ENCODE measurements at regions of chr6 and their contacts with region 1.

Region 1: DNA sequence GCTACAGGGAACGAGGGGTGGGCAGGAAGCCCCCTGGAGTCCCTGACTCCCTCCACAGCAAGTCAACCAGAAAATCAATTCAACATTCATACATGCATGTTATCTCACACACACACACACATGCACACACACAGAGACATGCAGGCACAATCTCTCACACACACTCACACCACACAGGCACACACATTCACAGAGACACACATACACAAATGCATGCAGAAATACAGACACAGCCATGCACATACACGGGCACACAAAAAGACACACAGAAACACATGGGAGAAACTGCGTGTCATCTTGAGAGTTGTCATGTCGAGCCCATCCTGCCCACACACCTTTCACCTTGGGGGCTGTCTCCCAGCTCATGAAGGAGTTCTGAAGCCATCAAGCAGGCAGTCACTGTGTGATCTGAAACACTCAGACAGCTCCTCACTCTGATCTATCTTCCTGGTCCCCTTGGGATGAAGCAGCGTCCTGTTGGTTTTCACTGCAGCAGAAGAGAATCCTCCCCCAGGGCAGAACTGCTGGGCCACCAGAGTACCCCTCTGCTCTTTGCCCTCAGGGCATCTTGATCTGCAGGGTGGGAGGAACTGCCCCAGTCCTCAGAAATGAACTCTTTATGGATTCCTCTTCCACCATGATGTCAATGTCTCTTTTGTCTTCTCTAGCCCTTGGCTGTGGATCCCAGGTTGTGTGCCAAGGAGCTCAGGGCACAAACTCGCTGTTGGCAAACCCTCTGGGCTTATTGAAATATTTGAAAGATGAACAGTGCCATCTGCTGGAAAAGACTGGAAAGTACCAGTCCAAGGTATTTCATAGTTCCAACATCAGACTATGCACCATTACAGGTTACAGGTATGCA is 8.8 kb downstream of the RAET1L start:
- DNase-seq: peak in 1 of 2 donors; percentile 68
- ATAC-seq: peak in 7 of 8 donors; percentile 71 to 85 (median 83)
- H3K4me3 ChIP-seq: no peak overlapping the region
- H3K27ac ChIP-seq: no peak overlapping the region
- H3K4me1 ChIP-seq: peaks cover 0 to 10% (median 0%) of the 10 kb centered on the region in 9 donors
- H3K27me3 ChIP-seq: peaks cover 16 to 82% (median 72%) of the 10 kb centered on the region in 7 donors
- CTCF ChIP-seq: peak; percentile 52 to 81 (median 72)

Region 2: GRCh38 chr6:149473080-149474052 is 543.2 kb before region 1 on chr6:
- intact Hi-C with region 1: no loop called
- DNase-seq: no peak
- ATAC-seq: peak in 7 of 8 donors; percentile 45 to 84 (median 69)
- H3K4me3 ChIP-seq: peak overlapping the region in 3 of 10 donors; percentile 4 to 15 (median 8)
- H3K27ac ChIP-seq: no peak overlapping the region
- H3K4me1 ChIP-seq: peaks cover 0 to 16% (median 10%) of the 10 kb centered on the region in 9 donors
- H3K27me3 ChIP-seq: peaks cover 0 to 15% (median 5%) of the 10 kb centered on the region in 7 donors
- CTCF ChIP-seq: peak in 1 of 9 donors; percentile 24

Region 3: GRCh38 chr6:149834513-149835481 is 181.8 kb before region 1 on chr6:
- intact Hi-C with region 1: loop called in 6 of 10 experiments (anchors 5 to 10 kb)
- DNase-seq: peak in 1 of 2 donors; percentile 54
- ATAC-seq: peak in 4 of 8 donors; percentile 37 to 72 (median 56)
- H3K4me3 ChIP-seq: no peak overlapping the region
- H3K27ac ChIP-seq: no peak overlapping the region
- H3K4me1 ChIP-seq: peaks cover 0 to 1% (median 0%) of the 10 kb centered on the region in 9 donors
- H3K27me3 ChIP-seq: no peaks in the 10 kb centered on the region
- CTCF ChIP-seq: peak; percentile 82 to 97 (median 93)

Region 4: DNA sequence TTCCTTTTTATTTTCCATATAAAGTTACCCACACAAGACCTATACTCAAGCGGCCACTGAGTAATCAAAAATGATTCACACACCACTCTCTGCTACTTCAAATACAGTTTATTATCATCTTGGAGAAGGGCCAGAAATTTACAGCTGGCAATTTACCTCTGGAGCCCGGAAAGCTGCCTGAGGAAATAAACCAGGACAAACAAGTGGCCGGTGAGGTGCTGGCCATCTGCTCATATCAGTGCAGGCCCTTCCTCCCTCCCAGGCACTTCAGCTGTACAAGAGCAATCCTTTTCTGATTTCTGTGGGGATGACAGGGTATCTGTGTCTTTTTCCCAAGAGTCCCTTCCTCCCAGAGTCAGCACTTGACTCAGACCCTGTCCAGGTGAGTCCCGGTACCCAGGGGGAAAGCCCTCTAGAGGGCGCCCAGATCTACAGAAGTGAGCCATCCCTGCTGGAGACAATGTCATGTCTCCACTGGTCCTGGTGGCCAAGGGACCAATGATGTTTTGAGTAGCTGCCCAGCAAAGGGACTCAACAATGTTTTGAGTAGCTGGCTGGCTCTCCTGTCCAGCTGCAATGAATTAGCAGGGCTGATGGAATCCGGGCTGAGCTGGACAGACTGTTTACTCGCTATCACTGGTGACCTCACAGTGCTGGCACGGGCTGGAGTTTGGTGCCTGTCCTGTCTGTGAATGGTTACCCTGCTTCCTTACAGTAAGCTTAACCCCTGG is 176.0 kb before region 1 on chr6:
- intact Hi-C with region 1: loop called in 5 of 10 experiments (anchors 2 to 10 kb)
- DNase-seq: peak; percentile 79 to 85
- ATAC-seq: peak; percentile 94 to 98 (median 96)
- H3K4me3 ChIP-seq: no peak overlapping the region
- H3K27ac ChIP-seq: peak overlapping the region in 4 of 10 donors; percentile 11 to 51 (median 33)
- H3K4me1 ChIP-seq: peaks cover 0 to 17% (median 11%) of the 10 kb centered on the region in 9 donors
- H3K27me3 ChIP-seq: no peaks in the 10 kb centered on the region
- CTCF ChIP-seq: peak; percentile 33 to 76 (median 60)

Region 5: DNA sequence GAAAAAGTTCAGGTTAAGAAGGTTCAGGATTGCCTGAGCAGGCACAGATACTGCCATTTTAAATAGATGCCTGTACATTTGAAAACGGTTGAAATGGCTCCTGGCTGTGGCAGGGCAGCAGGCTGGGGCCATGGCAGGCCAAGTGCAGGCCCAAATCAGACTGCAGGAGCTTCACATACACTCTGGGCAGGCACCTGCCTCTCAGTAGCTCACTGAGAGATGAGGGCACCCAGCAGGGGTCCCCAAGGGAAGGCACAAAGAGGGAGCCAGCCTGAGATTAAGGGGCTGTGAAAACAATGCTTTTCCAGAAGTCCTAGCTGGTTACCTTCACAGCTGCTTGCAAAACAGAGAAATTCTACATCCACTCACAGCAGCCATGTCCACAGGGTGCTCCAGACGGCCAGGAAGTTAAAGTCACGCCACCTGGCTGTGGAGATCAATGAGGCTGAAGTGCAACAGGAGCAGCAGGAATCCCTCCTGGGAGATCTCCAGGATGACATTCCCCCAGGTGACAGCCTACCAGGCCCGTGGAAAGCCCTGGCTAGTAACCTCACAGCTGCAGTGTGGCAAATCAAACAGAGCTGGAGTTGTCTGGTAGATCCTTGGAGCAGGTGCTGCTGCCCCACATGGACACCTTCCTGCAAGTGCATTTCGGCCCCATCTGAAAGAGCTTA is 112.5 kb before region 1 on chr6:
- intact Hi-C with region 1: no loop called
- DNase-seq: no peak
- ATAC-seq: no peak
- H3K4me3 ChIP-seq: no peak overlapping the region
- H3K27ac ChIP-seq: no peak overlapping the region
- H3K4me1 ChIP-seq: peaks cover 0 to 13% (median 9%) of the 10 kb centered on the region in 9 donors
- H3K27me3 ChIP-seq: no peaks in the 10 kb centered on the region
- CTCF ChIP-seq: no peak

Region 6: GRCh38 chr6:150195996-150196417 is 179.5 kb after region 1 on chr6:
- intact Hi-C with region 1: no loop called
- DNase-seq: no peak
- ATAC-seq: peak in 5 of 8 donors; percentile 34 to 60 (median 41)
- H3K4me3 ChIP-seq: no peak overlapping the region
- H3K27ac ChIP-seq: peak overlapping the region in 4 of 10 donors; percentile 8 to 31 (median 12)
- H3K4me1 ChIP-seq: peaks cover 0 to 51% (median 26%) of the 10 kb centered on the region in 9 donors
- H3K27me3 ChIP-seq: no peaks in the 10 kb centered on the region
- CTCF ChIP-seq: no peak

Region 7: DNA sequence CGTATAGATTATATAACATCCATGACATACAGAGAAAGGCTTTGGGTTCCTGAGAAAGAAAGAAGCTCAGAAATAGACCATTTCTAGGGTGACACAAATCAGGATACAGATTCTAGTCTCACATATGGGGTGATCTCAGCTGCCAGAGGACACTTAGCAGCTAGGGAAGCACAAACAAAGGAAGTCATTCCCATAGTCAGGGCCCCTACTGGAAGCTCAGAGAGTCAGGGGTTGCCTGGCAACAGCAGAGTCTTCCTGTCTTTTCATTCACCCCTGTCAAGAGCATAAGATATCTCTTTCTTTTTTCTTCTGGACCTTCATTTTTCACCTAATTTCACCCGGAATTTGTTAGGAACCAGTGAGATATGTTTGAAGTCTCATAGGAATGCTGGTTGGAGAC is 270.4 kb after region 1 on chr6:
- intact Hi-C with region 1: no loop called
- DNase-seq: no peak
- ATAC-seq: no peak
- H3K4me3 ChIP-seq: no peak overlapping the region
- H3K27ac ChIP-seq: no peak overlapping the region
- H3K4me1 ChIP-seq: no peaks in the 10 kb centered on the region
- H3K27me3 ChIP-seq: peaks cover 0 to 25% (median 8%) of the 10 kb centered on the region in 7 donors
- CTCF ChIP-seq: no peak

Measured in heart right ventricle (tissue), 16 donors.